ENCODE measurements at regions of chr7 and their contacts with region 1.

Region 1: GRCh38 chr7:107563775-107564552 is at the starts of genes COG5 and DUS4L:
- DNase-seq: peak; percentile 81
- ATAC-seq: peak; percentile 66
- H3K4me3 ChIP-seq: peak within 1 kb of the TSS; percentile 87
- H3K27ac ChIP-seq: peak within 1 kb of the TSS; percentile 97
- H3K4me1 ChIP-seq: peaks cover 55% of the 10 kb centered on the region
- H3K27me3 ChIP-seq: no peaks in the 10 kb centered on the region
- CTCF ChIP-seq: no peak
- total RNA-seq, gene COG5: 46.5 and 51.7 TPM in 2 replicates
- total RNA-seq, gene DUS4L: 10.2 and 12.9 TPM in 2 replicates

Region 2: DNA sequence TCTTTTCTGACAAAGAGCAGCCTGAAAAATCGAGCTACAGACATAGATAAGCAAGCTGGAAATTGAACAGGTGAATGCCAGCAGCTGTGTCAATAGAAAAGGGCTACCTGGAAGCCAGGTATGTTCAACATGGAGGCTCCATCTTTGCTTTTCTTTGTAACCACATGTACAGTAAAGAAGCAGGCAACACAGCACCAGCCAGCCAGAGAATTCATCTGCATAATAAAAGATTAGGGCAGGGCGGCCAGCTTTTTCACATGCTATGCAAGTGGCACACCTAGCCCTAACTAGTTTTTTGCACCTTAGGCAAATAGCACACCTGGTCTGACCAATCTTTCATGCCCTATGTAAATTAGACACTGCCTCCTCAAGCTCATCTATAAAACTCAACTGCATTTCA is 26.0 kb before region 1 on chr7:
- CTCF ChIA-PET with region 1: no interaction called
- POLR2A ChIA-PET with region 1: no interaction called
- intact Hi-C with region 1: no loop called
- DNase-seq: no peak
- ATAC-seq: no peak
- H3K4me3 ChIP-seq: no peak overlapping the region
- H3K27ac ChIP-seq: no peak overlapping the region
- H3K4me1 ChIP-seq: no peaks in the 10 kb centered on the region
- H3K27me3 ChIP-seq: no peaks in the 10 kb centered on the region
- CTCF ChIP-seq: no peak

Region 3: GRCh38 chr7:107597953-107598352 is 34.0 kb after region 1 on chr7:
- CTCF ChIA-PET with region 1: no interaction called
- POLR2A ChIA-PET with region 1: interaction called, 22 read pairs
- intact Hi-C with region 1: loop called (anchors 1 kb)
- DNase-seq: no peak
- ATAC-seq: no peak
- H3K4me3 ChIP-seq: no peak overlapping the region
- H3K27ac ChIP-seq: no peak overlapping the region
- H3K4me1 ChIP-seq: peaks cover 33% of the 10 kb centered on the region
- H3K27me3 ChIP-seq: no peaks in the 10 kb centered on the region
- CTCF ChIP-seq: no peak

Region 4: GRCh38 chr7:107614425-107614824 is 50.5 kb after region 1 on chr7:
- CTCF ChIA-PET with region 1: no interaction called
- POLR2A ChIA-PET with region 1: no interaction called
- intact Hi-C with region 1: loop called (anchors 5 kb)
- DNase-seq: peak; percentile 83
- ATAC-seq: peak; percentile 87
- H3K4me3 ChIP-seq: no peak overlapping the region
- H3K27ac ChIP-seq: peak overlapping the region; percentile 51
- H3K4me1 ChIP-seq: peaks cover 45% of the 10 kb centered on the region
- H3K27me3 ChIP-seq: no peaks in the 10 kb centered on the region
- CTCF ChIP-seq: no peak

Region 5: DNA sequence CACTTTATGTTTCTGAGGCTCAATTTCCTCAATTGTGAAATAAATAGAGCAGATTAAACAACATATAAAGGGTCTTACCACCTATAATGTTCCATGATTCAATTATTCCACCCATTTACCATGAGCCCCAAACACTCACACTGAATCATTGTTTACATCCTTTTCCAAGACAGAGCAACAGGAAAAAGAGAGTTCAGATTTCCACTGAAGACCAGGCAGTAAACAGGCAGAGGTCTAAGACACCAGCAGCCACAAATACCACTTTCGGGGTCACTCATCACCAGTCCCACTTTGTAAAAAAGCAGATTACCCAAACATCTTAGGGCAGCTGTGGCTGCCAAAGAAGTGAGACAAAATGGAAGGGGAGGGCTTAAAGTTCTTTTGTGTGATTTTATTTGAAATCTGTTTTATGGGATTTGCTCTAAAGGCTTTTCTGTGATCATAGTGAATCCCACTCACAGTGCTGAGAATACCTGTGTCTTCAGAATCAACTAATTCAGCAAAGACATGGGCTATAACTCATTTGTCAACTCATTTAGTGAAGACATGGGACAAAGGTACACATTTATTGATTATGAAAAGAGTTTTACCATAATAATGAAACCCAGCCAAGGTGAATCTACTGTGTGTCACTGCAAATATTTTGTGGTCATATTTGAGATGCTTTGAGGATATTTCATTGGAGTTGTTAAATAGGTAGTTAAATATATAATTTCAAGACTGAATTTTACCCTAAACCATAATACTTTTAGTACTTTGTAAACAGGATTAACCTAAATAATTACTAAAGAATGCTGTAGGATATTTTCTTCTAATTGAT is 302.2 kb after region 1 on chr7:
- CTCF ChIA-PET with region 1: no interaction called
- POLR2A ChIA-PET with region 1: no interaction called
- intact Hi-C with region 1: loop called (anchors 5 kb)
- DNase-seq: peak; percentile 81
- ATAC-seq: peak; percentile 92
- H3K4me3 ChIP-seq: peak overlapping the region; percentile 55
- H3K27ac ChIP-seq: peak overlapping the region; percentile 93
- H3K4me1 ChIP-seq: peaks cover 19% of the 10 kb centered on the region
- H3K27me3 ChIP-seq: no peaks in the 10 kb centered on the region
- CTCF ChIP-seq: no peak